ENCODE measurements at regions of chr14 and their contacts with region 1.

Region 1: GRCh38 chr14:36524874-36525745 is 5.1 kb upstream of the NKX2-1 start:
- DNase-seq: peak; percentile 65
- ATAC-seq: peak; percentile 88
- H3K4me3 ChIP-seq: peak overlapping the region; percentile 39 to 56
- H3K27ac ChIP-seq: no peak overlapping the region
- H3K4me1 ChIP-seq: peaks cover 0 to 21% of the 10 kb centered on the region in 2 experiments; a peak in 2 of 4 replicates
- H3K27me3 ChIP-seq: peaks cover 4% of the 10 kb centered on the region; the same call in 1 of the 2 replicates
- CTCF ChIP-seq: peak; percentile 59 to 84 (median 79); a peak in 5 of 6 replicates
- POLR2A ChIP-seq: no peak
- RAD21 ChIP-seq: peak; percentile 56

Region 2: DNA sequence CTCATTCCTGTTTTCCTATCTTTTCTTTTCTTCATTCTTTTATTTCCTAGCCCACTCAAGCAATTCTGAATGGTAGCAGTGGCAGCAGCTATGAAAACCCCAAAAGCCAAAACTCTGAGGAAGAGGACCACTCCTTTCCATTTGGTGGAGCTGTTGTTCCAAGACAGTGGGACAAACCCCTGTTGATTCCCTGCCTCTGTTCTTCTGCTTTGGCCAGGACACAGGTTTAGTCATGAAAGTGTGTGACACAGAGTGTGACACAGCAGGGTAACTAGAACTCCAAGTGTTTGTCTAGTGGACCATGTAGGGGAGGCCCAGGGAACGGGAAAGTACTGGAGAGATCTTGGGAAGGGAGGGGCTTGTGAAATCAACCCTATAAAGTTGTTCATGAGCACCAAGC is 419.7 kb before region 1 on chr14:
- CTCF ChIA-PET with region 1: interaction called, 13 read pairs
- POLR2A ChIA-PET with region 1: no interaction called
- RAD21 ChIA-PET with region 1: no interaction called
- intact Hi-C with region 1: no loop called
- DNase-seq: peak; percentile 40
- ATAC-seq: peak; percentile 87
- H3K4me3 ChIP-seq: no peak overlapping the region
- H3K27ac ChIP-seq: no peak overlapping the region
- H3K4me1 ChIP-seq: no peaks in the 10 kb centered on the region
- H3K27me3 ChIP-seq: peaks cover 4% of the 10 kb centered on the region; the same call in 1 of the 2 replicates
- CTCF ChIP-seq: peak; percentile 43 to 60 (median 46); a peak in 4 of 6 replicates
- POLR2A ChIP-seq: no peak
- RAD21 ChIP-seq: peak; percentile 72

Region 3: GRCh38 chr14:36207500-36207899 is 317.6 kb before region 1 on chr14:
- CTCF ChIA-PET with region 1: no interaction called
- POLR2A ChIA-PET with region 1: no interaction called
- RAD21 ChIA-PET with region 1: no interaction called
- intact Hi-C with region 1: loop called (anchors 1 kb)
- DNase-seq: no peak
- ATAC-seq: peak; percentile 63
- H3K4me3 ChIP-seq: no peak overlapping the region
- H3K27ac ChIP-seq: no peak overlapping the region
- H3K4me1 ChIP-seq: no peaks in the 10 kb centered on the region
- H3K27me3 ChIP-seq: 0 out of 2 replicates have a peak, but pooled peaks cover 2% of the 10 kb centered on the region
- CTCF ChIP-seq: peak; percentile 36 to 57 (median 42); a peak in 4 of 6 replicates
- POLR2A ChIP-seq: no peak
- RAD21 ChIP-seq: peak; percentile 50

Region 4: DNA sequence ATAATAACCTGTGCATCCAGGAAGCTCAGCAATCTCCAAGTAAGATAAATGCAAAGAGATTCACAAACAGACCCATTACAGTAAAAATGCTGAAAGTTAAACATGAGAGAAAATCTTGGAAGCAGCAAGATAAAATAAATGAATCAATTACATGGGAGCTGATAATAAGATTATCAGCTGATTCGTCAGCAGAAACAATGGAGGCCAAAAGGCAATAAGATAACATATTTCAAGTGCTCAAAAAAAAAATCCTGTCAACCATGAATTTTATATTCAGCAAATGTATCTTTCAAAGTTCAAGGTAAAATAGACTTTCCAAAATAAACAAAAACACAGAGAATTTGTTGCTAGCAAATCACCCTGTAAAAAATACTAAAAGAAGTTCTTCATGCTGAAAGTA is 168.2 kb before region 1 on chr14:
- CTCF ChIA-PET with region 1: no interaction called
- POLR2A ChIA-PET with region 1: no interaction called
- RAD21 ChIA-PET with region 1: no interaction called
- intact Hi-C with region 1: no loop called
- DNase-seq: no peak
- ATAC-seq: no peak
- H3K4me3 ChIP-seq: no peak overlapping the region
- H3K27ac ChIP-seq: no peak overlapping the region
- H3K4me1 ChIP-seq: no peaks in the 10 kb centered on the region
- H3K27me3 ChIP-seq: no peaks in the 10 kb centered on the region
- CTCF ChIP-seq: no peak
- POLR2A ChIP-seq: no peak
- RAD21 ChIP-seq: no peak

Region 5: GRCh38 chr14:36514278-36515104 is 10.6 kb before region 1 on chr14:
- CTCF ChIA-PET with region 1: interaction called, 18 read pairs
- POLR2A ChIA-PET with region 1: no interaction called
- RAD21 ChIA-PET with region 1: no interaction called
- intact Hi-C with region 1: no loop called
- DNase-seq: no peak
- ATAC-seq: no peak
- H3K4me3 ChIP-seq: no peak overlapping the region
- H3K27ac ChIP-seq: no peak overlapping the region
- H3K4me1 ChIP-seq: peaks cover 0 to 2% of the 10 kb centered on the region in 2 experiments; a peak in 1 of 4 replicates
- H3K27me3 ChIP-seq: peaks cover 19% of the 10 kb centered on the region
- CTCF ChIP-seq: no peak
- POLR2A ChIP-seq: no peak
- RAD21 ChIP-seq: no peak

Region 6: DNA sequence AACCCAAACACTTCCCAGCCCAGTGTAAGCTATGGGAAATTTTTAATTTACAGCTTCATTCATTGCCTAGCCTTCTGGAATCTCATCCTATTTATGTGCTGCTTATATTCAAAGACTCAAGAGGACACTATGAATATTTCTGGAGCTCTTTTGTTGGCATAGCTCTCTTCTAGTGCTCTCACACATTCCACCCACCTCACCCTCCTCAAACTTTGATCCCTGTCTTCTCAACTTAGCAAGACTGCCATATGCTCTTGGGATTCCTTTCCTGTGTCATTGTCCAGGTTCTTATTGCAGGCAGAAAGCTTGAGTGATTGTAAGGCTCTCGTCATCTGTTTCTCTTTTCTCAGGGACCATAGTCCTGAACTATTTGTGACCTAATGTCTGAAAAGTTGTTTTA is 12.9 kb after region 1 on chr14:
- CTCF ChIA-PET with region 1: interaction called, 18 read pairs
- POLR2A ChIA-PET with region 1: no interaction called
- RAD21 ChIA-PET with region 1: no interaction called
- intact Hi-C with region 1: no loop called
- DNase-seq: no peak
- ATAC-seq: no peak
- H3K4me3 ChIP-seq: no peak overlapping the region
- H3K27ac ChIP-seq: no peak overlapping the region
- H3K4me1 ChIP-seq: no peaks in the 10 kb centered on the region
- H3K27me3 ChIP-seq: no peaks in the 10 kb centered on the region
- CTCF ChIP-seq: no peak
- POLR2A ChIP-seq: no peak
- RAD21 ChIP-seq: no peak